Activated naive CD4-positive, alpha-beta T cell treated with anti-CD3 and anti-CD28 coated beads, Interleukin-2, amount 10 ng/mL, durations not matched to agents 7 days and 5 days (primary cell): ENCODE measurements at regions of chr5 and their contacts with region 1.

Region 1: DNA sequence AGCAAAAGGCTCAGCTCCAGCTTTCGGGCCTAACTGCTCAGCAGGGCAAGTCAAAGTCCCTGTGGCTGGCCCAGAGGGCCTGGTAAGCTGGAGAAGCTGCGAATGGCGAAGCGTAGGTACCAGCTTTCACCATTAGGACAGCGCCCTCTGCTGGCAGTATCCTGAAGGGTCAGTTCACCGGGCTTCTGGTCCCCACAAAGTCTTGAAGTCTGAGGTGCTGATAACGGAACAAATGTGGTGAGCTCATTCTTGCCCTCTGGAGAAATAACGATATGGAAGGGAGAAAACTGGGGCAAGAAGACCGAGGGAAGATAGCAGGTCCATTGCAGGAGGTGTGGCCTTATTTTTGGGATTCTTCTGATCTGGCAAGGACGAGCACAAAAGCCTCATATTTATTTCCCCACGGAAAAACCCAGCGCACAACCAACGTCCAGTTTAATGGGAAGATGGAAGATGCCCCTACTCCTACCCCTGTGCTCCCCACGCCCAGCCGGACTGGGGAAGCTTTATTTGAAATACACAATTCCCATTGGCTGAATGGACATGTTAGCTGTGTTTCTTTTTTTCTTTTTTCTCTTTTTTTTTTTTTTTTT is 7.2 kb downstream of the SOWAHA start:
- DNase-seq: peak; percentile 93
- H3K4me3 Mint-ChIP-seq: peak overlapping the region; percentile 40
- H3K27ac Mint-ChIP-seq: no peak overlapping the region
- H3K4me1 Mint-ChIP-seq: peaks cover 17% of the 10 kb centered on the region
- H3K27me3 Mint-ChIP-seq: peaks cover 75% of the 10 kb centered on the region

Region 2: GRCh38 chr5:132500931-132501630 is 319.2 kb before region 1 on chr5:
- CTCF ChIA-PET with region 1: interaction called, 22 read pairs
- DNase-seq: peak; percentile 83
- H3K4me3 Mint-ChIP-seq: no peak overlapping the region
- H3K27ac Mint-ChIP-seq: peak overlapping the region; percentile 12
- H3K4me1 Mint-ChIP-seq: peaks cover 39% of the 10 kb centered on the region
- H3K27me3 Mint-ChIP-seq: peaks cover 24% of the 10 kb centered on the region

Region 3: GRCh38 chr5:132506094-132506692 is 314.1 kb before region 1 on chr5:
- CTCF ChIA-PET with region 1: interaction called, 22 read pairs
- DNase-seq: peak; percentile 52
- H3K4me3 Mint-ChIP-seq: no peak overlapping the region
- H3K27ac Mint-ChIP-seq: no peak overlapping the region
- H3K4me1 Mint-ChIP-seq: peaks cover 2% of the 10 kb centered on the region
- H3K27me3 Mint-ChIP-seq: peaks cover 51% of the 10 kb centered on the region

Region 4: DNA sequence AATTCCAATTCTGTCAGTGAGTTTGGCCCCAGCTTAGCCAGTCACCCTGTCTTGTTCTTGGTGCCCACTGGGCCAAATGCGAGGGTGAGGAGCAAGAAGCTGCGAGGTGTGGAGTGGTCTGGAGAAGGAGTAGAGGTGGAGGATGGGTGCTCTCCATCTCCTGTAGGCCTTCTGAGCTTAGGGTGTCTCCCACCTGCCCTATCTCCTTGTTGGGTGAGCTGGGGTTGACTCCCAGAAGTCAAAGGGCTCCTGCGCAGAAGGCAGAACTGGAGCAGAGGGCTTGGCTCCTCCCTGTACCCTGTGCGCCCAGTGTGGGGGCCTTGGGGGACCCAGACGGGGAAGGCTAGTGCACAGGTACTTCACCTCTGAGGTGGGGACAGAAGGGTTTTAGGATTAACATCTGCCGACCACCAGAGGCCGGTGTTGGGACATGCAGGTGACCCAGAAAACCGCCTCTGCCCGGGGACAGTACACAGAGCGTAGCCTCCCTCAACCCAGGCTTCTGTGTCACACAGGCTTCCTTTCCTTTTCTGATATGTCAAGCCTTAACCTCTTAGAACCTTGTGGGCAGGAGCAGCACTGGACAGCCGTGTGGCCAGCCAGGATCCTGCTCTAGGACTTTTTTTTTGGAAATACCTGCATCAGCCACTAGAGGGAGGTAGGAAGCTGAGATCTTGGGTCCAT is 293.8 kb before region 1 on chr5:
- CTCF ChIA-PET with region 1: interaction called, 47 read pairs
- DNase-seq: peak; percentile 46
- H3K4me3 Mint-ChIP-seq: no peak overlapping the region
- H3K27ac Mint-ChIP-seq: no peak overlapping the region
- H3K4me1 Mint-ChIP-seq: peaks cover 33% of the 10 kb centered on the region
- H3K27me3 Mint-ChIP-seq: peaks cover 35% of the 10 kb centered on the region

Region 5: GRCh38 chr5:132591145-132591544 is 229.1 kb before region 1 on chr5:
- CTCF ChIA-PET with region 1: interaction called, 14 read pairs
- DNase-seq: no peak
- H3K4me3 Mint-ChIP-seq: no peak overlapping the region
- H3K27ac Mint-ChIP-seq: no peak overlapping the region
- H3K4me1 Mint-ChIP-seq: no peaks in the 10 kb centered on the region
- H3K27me3 Mint-ChIP-seq: no peaks in the 10 kb centered on the region

Region 6: GRCh38 chr5:132746954-132747615 is 73.2 kb before region 1 on chr5 and contains the start of gene CCNI2:
- CTCF ChIA-PET with region 1: interaction called, 37 read pairs
- DNase-seq: peak; percentile 73
- H3K4me3 Mint-ChIP-seq: peak within 1 kb of the TSS; percentile 77
- H3K27ac Mint-ChIP-seq: peak within 1 kb of the TSS; percentile 74
- H3K4me1 Mint-ChIP-seq: peaks cover 15% of the 10 kb centered on the region
- H3K27me3 Mint-ChIP-seq: peaks cover 32% of the 10 kb centered on the region

Region 7: DNA sequence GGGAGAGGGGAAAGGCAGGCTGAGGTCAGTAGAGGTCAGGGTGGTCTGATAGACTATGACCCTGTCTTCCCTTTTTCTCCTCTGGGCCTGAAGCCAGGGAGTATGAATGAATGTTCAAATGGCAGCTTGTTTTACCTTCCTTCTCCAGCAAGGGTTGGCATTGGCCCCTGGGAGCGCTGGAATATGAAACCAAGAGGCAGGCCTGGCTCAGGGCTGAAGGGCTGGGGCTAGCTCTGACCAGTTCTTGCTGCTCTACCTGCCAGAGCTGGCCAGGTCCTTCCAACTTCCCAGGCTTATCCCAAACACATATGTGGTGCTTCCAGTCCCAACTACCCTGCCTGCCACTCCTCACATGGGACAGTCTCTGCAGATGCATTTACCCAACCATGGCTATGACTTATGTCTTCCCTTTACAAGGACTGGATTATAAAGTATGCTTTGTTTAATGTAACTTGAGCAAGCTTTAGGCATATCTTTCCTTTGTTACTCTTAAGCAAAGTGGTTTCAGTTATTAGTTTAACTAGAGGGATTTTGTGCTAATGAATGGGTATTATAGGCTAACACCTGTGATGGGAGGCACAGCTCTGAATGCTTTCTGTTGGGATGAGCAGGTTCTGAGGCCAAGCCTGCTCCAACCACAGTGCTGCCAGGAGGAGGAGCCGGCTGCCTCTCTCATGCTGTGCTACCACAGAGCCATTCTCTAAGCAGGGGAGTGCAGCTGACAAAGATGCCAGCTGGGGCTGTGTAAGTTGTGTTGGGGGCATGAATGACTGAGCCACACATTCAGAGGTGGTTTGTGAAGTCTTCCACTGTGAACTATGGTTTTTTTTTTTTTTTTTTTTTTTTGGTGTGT is 66.9 kb before region 1 on chr5:
- CTCF ChIA-PET with region 1: interaction called, 37 read pairs
- DNase-seq: peak; percentile 36
- H3K4me3 Mint-ChIP-seq: no peak overlapping the region
- H3K27ac Mint-ChIP-seq: no peak overlapping the region
- H3K4me1 Mint-ChIP-seq: peaks cover 10% of the 10 kb centered on the region
- H3K27me3 Mint-ChIP-seq: peaks cover 4% of the 10 kb centered on the region

Region 8: GRCh38 chr5:132841305-132842086 is 21.2 kb after region 1 on chr5:
- CTCF ChIA-PET with region 1: no interaction called
- DNase-seq: no peak
- H3K4me3 Mint-ChIP-seq: no peak overlapping the region
- H3K27ac Mint-ChIP-seq: no peak overlapping the region
- H3K4me1 Mint-ChIP-seq: no peaks in the 10 kb centered on the region
- H3K27me3 Mint-ChIP-seq: peaks cover 19% of the 10 kb centered on the region